ENCODE measurements at regions of chr1 and their contacts with region 1.

Region 1: DNA sequence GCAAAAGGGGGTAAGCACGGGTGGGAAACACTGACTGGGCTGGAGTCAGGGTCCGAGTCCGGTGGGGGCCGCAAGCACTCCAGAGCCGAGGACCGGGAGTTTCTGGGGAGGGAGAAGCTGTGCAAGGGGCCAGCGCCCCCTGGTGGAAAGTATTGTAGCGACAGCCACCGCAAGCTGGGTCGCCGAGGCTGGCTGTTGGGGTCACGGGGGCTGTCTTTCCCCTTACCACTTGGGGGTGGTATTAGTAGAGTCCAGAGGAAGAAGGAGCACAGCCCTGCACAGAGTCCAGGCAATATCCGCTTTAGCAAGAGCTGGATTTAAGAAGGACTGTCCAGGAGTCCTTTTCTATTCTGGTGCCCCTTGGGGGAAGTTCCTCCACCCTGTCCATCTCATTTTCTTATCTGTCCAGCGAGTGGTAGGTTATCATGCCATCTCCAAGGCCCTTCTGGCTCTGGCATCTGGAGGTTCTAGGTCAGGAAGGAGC is 17.9 kb upstream of the ETV3 start:
- H3K4me3 Mint-ChIP-seq: peak overlapping the region; percentile 51
- H3K27ac Mint-ChIP-seq: peak overlapping the region; percentile 69
- H3K4me1 Mint-ChIP-seq: peaks cover 56% of the 10 kb centered on the region
- H3K27me3 Mint-ChIP-seq: peaks cover 29% of the 10 kb centered on the region

Region 2: DNA sequence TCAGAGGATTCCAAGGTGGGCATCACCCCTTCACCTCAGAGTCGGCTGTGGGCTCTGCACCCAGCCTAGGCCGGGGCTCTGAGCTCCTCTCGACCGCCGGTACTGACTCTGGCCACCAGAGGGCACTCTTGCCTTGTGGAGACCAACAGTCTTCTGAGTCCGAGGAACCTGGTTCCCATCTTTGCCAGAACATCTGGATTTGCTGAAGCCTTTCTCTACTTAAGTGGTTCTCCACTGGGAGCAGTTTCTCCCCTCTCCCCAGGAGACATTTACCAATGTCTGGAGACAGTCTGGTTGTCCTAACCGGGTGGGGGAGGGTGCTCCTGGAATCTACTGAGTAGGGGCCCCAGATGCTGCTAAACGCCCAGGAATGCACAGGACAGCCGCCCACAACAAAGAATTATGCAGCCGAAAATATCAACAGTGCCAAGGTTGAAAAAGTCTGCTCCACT is 65.9 kb before region 1 on chr1:
- intact Hi-C with region 1: loop called (anchors 1 kb)
- H3K4me3 Mint-ChIP-seq: no peak overlapping the region
- H3K27ac Mint-ChIP-seq: no peak overlapping the region
- H3K4me1 Mint-ChIP-seq: peaks cover 10% of the 10 kb centered on the region
- H3K27me3 Mint-ChIP-seq: peaks cover 12% of the 10 kb centered on the region

Region 3: DNA sequence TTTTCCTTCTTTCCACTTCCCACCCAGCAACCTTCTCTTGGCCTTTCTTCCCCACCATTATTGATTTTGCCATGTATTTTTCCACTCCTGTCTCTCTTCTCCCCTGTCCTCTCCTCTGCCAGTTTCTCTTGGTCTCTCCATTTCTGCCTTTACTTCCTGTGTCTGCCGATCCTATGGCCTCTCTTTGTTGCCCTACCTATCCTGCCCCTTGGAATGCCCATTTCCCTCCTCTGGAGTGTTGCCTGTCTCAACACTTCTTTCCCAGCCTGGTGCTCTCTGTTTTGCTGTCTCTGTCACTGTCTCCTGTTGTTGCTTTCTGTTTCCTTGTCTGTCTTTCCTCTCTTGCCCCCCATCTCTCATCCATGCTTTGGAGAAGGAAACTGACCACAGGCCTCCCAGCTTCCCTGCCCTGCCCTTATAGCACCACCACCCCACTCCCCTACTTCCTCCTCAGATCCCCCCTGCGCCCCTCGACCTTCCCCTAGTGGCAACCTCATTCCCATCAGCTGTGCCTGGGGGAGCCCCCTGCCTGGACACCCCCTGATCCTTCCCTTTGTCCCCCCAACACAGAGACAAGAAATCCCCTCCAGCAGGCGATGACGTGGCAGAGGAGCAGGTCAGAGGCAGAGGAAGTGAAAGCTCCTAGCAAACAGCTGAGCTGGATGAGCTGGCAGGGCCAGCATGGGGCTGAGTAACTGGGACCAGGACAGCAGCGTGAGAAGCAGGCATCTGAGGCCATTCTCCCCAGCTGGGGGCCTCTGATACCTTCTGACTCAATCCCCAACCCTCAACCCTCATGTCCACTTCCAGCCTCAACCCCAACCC is 49.9 kb before region 1 on chr1:
- intact Hi-C with region 1: loop called (anchors 5 kb)
- H3K4me3 Mint-ChIP-seq: peak overlapping the region; percentile 44
- H3K27ac Mint-ChIP-seq: peak overlapping the region; percentile 90
- H3K4me1 Mint-ChIP-seq: peaks cover 89% of the 10 kb centered on the region
- H3K27me3 Mint-ChIP-seq: peaks cover 19% of the 10 kb centered on the region

Region 4: DNA sequence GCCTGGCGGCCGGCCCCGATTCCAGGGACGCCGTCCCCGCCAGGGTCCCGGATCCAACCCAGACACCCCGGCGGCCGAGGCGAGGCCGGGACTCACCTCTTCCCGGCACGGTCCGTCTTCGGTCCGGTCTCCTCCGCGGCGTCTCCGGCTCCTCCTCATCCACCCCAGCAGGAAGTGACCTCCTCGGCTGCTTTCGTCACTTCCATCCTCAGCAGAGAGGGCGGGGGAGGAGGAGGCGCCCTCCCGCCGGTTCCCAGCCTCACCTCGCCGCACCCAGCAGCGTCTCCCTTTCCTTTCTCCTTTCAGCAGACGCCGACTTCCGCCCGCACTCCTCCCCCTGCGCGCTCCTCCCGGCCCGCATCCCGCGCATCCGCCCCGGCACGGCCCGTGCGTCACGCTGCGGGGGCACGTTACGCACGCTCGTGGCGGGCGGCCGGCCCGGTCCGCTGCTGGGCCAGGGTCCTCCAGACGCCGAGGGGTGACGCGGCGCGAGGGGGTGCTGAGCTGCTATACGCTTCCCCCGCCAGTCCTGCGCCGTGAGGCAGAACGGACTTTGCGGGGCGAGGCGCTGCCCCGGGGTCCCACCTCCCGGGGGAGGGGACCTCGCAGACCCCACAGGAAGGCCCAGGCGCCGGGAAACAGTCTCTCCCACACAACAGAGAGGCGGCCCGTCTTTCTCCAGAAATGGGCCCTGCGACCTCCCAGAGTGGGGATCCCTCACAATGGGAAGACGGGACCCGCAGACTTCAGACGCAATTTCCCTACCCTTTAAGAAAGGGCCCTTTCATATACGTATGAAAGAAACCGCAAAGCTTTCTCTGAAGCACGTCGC is 17.7 kb before region 1 on chr1 and contains the start of gene ETV3:
- intact Hi-C with region 1: loop called (anchors 2 kb)
- H3K4me3 Mint-ChIP-seq: peak within 1 kb of the TSS; percentile 95
- H3K27ac Mint-ChIP-seq: peak within 1 kb of the TSS; percentile 94
- H3K4me1 Mint-ChIP-seq: peaks cover 62% of the 10 kb centered on the region
- H3K27me3 Mint-ChIP-seq: no peaks in the 10 kb centered on the region

Measured in dendritic cell treated with granulocyte-macrophage colony-stimulating factor and Interleukin-4, amounts not matched to agents 40 ng/mL and 50 ng/mL, for 4 days (primary cell).